ENCODE measurements at regions of chr5 and their contacts with region 1.

Region 1: DNA sequence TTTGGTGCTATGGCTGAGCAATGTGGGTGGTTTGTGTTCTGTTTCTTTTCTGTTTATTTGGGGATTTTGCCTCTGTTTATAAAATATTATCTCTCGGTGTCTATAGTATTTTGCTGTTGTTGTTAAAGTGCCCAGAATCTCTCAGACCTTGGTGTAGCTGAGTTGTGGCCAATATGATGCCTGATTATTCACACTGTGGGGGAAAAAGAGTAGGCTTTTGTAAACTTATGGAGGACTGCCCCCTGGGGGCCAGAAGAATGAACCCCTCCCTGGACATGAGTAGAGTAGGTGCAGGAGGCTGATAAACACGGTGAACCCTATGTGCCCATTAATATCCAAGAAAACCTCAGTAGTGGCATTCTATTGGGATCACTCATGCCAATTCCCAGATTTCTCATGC is 49.0 kb upstream of the DPYSL3 start:
- DNase-seq: peak in 1 of 2 donors; percentile 78
- H3K4me3 ChIP-seq: no peak overlapping the region
- H3K27ac ChIP-seq: peak overlapping the region in 1 of 2 donors; percentile 19
- H3K4me1 ChIP-seq: peaks cover 2 to 11% of the 10 kb centered on the region in 2 donors
- H3K27me3 ChIP-seq: no peaks in the 10 kb centered on the region
- CTCF ChIP-seq: peak; percentile 71 to 75 (median 71)

Region 2: DNA sequence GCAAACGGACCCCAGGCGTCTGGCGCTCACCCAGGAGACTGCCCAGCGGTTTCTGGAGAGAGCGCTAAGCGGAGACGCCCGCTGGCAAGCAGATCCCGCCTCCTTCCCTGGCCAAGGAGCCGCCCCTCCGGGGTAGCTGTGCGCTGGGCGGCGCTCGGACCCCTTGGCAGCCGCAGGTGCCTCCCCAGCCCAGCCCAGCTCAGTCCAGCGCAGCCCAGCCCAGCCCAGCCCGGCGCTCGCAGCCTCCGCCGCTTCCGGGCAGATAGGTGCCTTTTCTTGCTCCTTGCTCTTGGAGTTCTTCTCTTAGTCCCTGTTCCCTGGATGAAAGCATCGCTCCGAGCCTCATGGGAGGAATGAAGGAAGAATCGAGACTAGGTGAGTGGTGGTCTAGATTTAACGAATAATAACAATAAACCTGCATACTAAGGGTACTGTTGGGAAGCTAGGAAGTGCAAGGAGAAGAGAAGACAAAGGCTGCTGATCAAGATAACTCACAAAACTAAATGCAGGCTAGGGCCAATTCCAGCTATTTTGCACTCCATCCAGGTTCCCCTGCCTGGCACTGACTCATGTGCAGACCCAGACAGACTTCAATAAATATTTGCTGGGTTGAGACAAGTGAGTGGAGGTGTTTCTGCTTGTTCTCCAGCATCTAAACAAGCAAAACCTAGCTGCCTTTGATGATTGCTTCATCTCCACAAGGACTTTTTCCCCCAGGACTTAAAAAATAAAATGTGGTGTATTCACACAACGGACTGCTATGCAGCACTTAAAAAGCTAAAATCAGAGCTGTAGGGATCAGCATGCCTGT is 323.8 kb before region 1 on chr5 and contains the start of gene STK32A:
- intact Hi-C with region 1: loop called (anchors 5 kb)
- DNase-seq: peak in 1 of 2 donors; percentile 85
- H3K4me3 ChIP-seq: peak within 1 kb of the TSS; percentile 73 to 77
- H3K27ac ChIP-seq: peak within 1 kb of the TSS; percentile 88 to 95
- H3K4me1 ChIP-seq: peaks cover 0 to 11% of the 10 kb centered on the region in 2 donors
- H3K27me3 ChIP-seq: no peaks in the 10 kb centered on the region
- CTCF ChIP-seq: no peak
- total RNA-seq, gene STK32A: 6.2 TPM

Region 3: DNA sequence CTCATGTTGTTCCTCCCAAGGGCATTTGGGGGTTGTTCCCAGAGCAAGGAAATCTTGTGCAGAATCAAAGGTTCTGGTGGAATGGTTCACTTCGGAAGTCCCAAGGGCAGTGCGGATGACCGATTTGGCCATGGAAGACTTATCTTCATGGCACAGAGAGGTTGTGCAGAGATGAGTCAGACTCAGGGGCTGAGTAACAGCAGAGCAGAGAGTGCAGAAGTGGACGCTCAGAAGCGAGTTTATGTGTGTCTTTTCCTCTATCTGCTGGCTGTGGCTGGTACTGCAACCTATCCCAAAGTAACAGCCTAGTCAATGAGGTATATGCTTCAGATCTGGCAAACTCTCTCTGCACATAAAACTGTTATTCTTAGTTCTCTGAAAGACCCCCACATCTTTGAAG is 167.0 kb before region 1 on chr5:
- intact Hi-C with region 1: loop called (anchors 5 kb)
- DNase-seq: peak in 1 of 2 donors; percentile 86
- H3K4me3 ChIP-seq: no peak overlapping the region
- H3K27ac ChIP-seq: peak overlapping the region; percentile 38 to 59
- H3K4me1 ChIP-seq: no peaks in the 10 kb centered on the region
- H3K27me3 ChIP-seq: no peaks in the 10 kb centered on the region
- CTCF ChIP-seq: peak; percentile 53 to 63 (median 55)

Region 4: GRCh38 chr5:147453875-147454814 is 104.7 kb before region 1 on chr5:
- intact Hi-C with region 1: loop called (anchors 1 kb)
- DNase-seq: peak in 1 of 2 donors; percentile 93
- H3K4me3 ChIP-seq: peak overlapping the region; percentile 75 to 87
- H3K27ac ChIP-seq: peak overlapping the region; percentile 92 to 96
- H3K4me1 ChIP-seq: peaks cover 0 to 26% of the 10 kb centered on the region in 2 donors
- H3K27me3 ChIP-seq: no peaks in the 10 kb centered on the region
- CTCF ChIP-seq: peak; percentile 90 to 96 (median 96)

Region 5: GRCh38 chr5:147576646-147577535 is 18.1 kb after region 1 on chr5:
- intact Hi-C with region 1: loop called (anchors 2 kb)
- DNase-seq: no peak
- H3K4me3 ChIP-seq: no peak overlapping the region
- H3K27ac ChIP-seq: no peak overlapping the region
- H3K4me1 ChIP-seq: peaks cover 0 to 4% of the 10 kb centered on the region in 2 donors
- H3K27me3 ChIP-seq: no peaks in the 10 kb centered on the region
- CTCF ChIP-seq: peak; percentile 78 to 88 (median 80)

Region 6: DNA sequence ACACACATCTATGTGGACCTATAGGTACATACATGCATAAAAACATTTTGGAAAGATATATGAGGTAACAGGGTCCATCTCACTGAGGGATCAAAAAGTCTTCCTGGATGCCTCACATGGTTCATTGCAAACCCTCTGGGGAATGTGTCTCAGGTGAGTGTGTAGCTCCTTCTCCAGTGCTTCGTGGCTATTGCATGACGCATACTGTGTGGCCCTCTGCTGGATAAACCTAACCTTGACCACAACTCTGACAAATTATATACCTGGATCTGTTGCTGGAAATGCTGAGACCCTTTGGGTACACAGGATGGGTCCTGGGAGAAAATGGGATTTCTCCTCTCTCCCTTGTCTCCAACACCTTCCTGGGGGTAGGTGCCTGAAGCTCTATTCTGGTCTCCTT is 131.8 kb after region 1 on chr5:
- intact Hi-C with region 1: no loop called
- DNase-seq: no peak
- H3K4me3 ChIP-seq: no peak overlapping the region
- H3K27ac ChIP-seq: no peak overlapping the region
- H3K4me1 ChIP-seq: no peaks in the 10 kb centered on the region
- H3K27me3 ChIP-seq: no peaks in the 10 kb centered on the region
- CTCF ChIP-seq: no peak